Posterior vena cava (tissue), 2 donors: ENCODE measurements at regions of chr20 and their contacts with region 1.

Region 1: GRCh38 chr20:50610221-50610620 is 81.1 kb downstream of the RIPOR3 start:
- DNase-seq: no peak

Region 2: GRCh38 chr20:50224531-50225255 is 385.5 kb before region 1 on chr20:
- intact Hi-C with region 1: no loop called
- DNase-seq: peak; percentile 95

Region 3: DNA sequence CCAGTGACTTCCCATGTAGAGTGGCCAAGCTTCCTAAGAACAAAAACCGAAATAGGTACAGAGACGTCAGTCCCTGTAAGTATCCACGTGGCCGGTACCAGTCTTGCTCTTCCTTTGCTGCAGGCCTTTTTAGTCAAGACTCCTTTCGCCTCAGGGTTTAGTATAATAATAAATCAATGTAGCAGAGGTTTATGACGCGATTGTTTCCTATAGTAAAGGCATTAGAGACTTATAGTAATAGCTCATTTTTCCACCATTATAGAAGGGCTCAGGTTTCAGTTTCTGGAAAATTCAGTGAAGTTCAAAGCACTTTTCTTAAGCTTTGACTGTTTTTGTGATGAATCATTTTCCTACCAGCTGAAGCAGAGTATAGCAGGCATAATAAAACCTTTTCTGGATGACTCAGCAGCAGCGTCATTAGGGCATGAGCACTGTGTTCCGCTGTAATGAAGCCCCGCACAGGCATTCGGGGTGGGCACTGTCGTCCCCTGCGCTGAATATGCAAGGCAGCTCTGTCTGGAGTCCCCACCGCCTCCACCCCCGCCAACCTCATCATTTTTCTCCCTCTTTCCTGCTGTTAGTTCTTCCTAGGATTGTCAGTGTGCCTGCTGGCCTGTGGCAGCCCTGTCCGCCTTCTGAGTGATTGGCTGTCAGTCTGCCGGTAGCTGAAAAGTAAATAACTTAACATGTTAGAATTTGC is 48.7 kb before region 1 on chr20:
- intact Hi-C with region 1: no loop called
- DNase-seq: no peak

Region 4: DNA sequence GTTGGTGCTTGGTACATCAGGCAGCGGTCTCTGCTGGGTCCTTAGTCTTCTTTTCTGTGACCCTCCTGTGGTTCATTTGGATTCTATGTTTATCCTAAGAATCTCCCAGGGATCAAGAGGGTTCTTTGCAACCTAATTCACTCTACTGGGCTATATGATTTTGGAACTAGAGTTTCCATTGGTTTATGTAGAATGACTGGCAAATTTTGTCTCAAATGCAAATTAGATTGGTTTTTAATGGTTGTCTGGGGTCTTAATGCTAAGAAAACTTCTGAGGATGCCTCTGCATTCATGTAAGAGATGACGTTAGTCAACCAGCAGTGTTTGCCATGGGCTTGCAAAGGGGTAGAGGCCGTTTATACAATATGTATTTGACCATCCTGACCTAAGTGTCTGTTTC is 1711.2 kb after region 1 on chr20:
- intact Hi-C with region 1: loop called in 1 of 2 experiments (anchors 10 kb)
- DNase-seq: no peak